Heart left ventricle (tissue), 16 donors: ENCODE measurements at regions of chr1 and their contacts with region 1.

Region 1: DNA sequence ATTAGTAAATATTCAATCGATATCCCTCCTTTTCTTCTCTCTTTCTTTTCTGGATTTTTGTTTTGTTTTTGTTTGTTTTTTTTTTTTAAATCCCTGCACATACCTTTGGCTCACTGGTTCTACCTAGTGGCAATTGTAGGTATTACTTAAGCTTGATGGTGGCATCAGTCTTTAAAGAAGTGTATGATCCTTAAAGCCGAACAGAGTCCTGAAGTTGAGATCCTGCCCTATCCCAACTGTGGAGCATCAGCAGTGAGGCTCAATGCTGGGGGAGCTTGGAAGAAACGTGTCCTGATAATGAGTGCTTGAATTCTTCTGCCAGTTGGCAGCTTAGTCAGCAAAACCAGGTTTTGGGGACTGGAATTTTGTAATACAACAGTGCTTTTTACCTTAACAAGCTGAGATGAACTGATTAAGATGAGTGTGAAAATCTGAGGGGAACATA is 60.8 kb downstream of the FASLG start:
- DNase-seq: no peak
- ATAC-seq: peak in 1 of 4 donors; percentile 58
- H3K4me3 ChIP-seq: no peak overlapping the region
- H3K27ac ChIP-seq: no peak overlapping the region
- H3K4me1 ChIP-seq: peaks cover 0 to 16% (median 0%) of the 10 kb centered on the region in 12 donors
- H3K27me3 ChIP-seq: no peaks in the 10 kb centered on the region
- CTCF ChIP-seq: peak; percentile 61 to 79 (median 70)
- POLR2A ChIP-seq: no peak

Region 2: DNA sequence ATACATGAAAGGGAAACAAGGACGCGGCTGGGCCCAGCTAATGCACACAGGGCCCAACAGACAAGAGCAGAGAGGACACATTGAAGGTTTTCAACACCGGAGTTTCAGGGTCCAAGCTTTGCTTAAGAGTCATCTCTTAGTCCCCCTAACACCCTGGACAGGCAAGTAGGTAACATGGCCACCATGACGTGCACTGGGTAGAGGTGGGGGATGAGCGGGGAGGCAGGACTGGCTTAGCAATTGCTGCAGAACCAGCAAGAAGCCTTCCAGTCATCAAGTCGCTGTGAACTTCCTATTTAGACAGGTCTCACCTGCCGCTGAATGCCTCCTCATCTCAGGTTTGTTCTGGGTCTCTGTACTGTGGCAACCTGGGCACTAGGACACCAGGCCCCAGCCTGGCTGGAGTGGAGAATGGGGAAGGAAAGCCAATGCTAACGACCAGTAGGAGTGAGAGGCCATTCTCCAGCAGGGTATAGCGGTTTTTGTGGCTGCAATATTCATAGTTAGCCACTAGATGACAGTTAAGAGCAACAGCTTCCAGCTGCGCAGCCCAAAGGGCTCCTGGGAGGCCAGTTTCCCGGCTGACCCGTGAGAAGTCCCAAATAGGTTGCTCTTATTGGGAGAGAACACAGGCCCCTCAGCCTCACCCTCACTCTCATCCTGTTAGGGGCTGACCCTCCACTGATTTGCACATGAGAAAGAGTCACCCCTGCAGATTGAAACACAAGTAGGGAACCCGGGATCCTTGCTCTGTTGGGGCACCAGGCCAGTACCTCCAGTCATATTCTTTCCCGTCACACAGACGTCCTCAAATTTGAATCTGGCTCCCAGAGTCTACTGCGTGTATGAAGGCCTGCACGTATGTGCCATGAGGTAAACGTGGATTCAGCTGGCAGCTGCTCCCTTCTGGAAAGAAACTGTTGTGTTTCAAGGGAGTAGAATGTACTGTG is 269.9 kb before region 1 on chr1:
- intact Hi-C with region 1: loop called (anchors 2 to 10 kb)
- DNase-seq: peak; percentile 37 to 73 (median 54)
- ATAC-seq: peak; percentile 74 to 90 (median 90)
- H3K4me3 ChIP-seq: peak overlapping the region in 4 of 12 donors; percentile 6 to 41 (median 14)
- H3K27ac ChIP-seq: peak overlapping the region in 2 of 12 donors; percentile 7 to 28
- H3K4me1 ChIP-seq: peaks cover 0 to 25% (median 6%) of the 10 kb centered on the region in 12 donors
- H3K27me3 ChIP-seq: no peaks in the 10 kb centered on the region
- CTCF ChIP-seq: peak; percentile 71 to 92 (median 86)
- POLR2A ChIP-seq: no peak

Region 3: DNA sequence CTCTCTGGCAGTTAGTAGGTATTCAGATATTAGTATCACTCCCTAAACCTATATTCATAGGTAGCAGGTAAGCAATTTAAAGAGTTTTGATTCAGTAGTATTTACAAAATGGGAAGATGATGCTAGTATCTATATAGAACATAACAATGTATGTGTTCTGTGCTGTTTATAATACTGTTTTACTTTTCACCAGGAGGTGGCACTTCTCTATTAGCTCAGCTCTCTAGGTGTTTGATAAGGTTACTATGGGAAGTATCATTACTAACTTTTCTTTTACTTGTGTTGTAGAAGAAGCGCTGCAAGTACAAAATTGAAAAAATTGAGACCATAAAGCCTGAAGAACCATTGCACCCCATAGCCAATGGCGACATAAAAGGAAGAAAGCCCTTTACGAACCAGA is 110.2 kb before region 1 on chr1:
- intact Hi-C with region 1: loop called (anchors 2 to 5 kb)
- DNase-seq: no peak
- ATAC-seq: peak in 2 of 4 donors; percentile 34 to 57
- H3K4me3 ChIP-seq: no peak overlapping the region
- H3K27ac ChIP-seq: no peak overlapping the region
- H3K4me1 ChIP-seq: no peaks in the 10 kb centered on the region
- H3K27me3 ChIP-seq: no peaks in the 10 kb centered on the region
- CTCF ChIP-seq: peak; percentile 10 to 50 (median 31)
- POLR2A ChIP-seq: no peak